ENCODE measurements at regions of chr3 and their contacts with region 1.

Region 1: GRCh38 chr3:183306798-183307671 is 54.0 kb downstream of the B3GNT5 start:
- DNase-seq: peak; percentile 91

Region 2: DNA sequence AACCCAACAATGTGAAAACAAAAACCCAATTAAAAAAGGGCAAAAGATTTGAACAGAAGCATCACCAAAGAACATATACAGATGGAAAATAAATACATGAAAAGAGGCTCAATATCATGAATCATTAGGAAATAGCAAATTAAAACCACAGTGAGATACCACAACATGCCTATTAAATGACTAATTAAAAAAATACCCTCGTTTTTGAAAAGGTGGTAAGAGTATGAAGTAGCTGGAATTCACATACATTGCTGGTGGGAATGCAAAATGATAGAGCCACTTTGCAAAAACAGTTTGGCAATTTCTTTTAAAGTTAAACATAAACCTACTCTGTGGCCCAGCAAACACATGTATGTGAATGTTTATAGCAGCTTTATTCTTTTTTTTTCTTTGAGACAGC is 21.8 kb after region 1 on chr3:
- intact Hi-C with region 1: loop called in 1 of 2 experiments (anchors 1 kb)
- DNase-seq: no peak

Region 3: DNA sequence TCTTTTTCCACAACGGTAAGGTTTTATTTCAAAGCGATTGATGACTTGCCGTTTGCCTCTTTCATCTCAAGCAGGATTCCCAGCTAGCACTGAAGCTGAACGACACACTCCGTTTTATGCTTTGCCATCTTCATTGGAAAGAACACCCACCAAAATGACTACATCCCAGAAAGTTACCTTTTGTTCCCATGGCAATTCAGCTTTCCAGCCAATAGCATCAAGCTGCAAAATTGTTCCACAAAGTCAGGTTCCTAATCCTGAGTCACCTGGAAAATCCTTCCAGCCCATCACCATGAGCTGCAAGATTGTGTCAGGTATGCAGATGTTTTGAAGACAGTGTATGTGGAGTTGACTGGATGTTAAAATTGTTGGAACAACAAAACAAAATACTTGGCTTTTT is 447.0 kb after region 1 on chr3:
- intact Hi-C with region 1: loop called in 1 of 2 experiments (anchors 10 kb)
- DNase-seq: no peak

Region 4: GRCh38 chr3:184757022-184757651 is 1450.1 kb after region 1 on chr3:
- intact Hi-C with region 1: no loop called
- DNase-seq: peak; percentile 93

Measured in posterior vena cava (tissue), 2 donors.